Activated B cell treated with CpG ODN at 0.5 μM for 24 hours (primary cell): ENCODE measurements at regions of chr22 and their contacts with region 1.

Region 1: DNA sequence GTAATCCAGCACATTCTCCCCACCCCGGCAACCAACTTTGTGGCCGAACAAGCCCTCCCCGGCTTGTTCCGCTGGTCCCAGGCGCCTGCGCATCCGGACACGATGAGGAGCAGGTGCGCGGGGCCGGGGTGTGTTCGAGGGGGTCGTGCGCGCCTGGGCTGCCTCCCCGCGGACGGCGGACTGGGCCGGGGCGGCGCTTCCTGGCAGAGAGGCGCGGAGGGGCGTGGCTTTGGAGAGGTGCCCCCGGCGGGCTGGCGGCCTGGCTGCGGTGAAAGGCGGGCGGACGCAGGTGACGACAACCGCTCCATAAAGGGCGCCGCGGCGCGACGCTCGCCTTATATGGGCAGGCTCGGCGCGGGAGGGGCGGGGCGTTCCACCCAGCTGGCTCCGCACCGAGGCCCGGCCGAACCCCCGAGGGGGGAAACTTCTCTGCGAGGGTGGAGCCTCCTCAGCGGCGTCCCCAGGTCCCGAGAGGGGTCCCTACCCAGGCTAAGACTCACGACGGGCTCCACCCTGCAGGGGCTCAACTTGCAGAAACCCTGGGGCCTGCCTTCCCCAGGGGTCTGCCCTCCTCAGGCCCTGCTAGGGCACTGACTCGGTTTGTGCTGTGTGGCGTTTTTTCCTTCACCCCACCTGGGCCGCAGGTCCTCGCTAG is 26.4 kb downstream of the TXN2 start:
- DNase-seq: peak; percentile 91
- ATAC-seq: peak; percentile 66
- H3K4me3 Mint-ChIP-seq: peak overlapping the region; percentile 69
- H3K27ac Mint-ChIP-seq: peak overlapping the region; percentile 95
- H3K4me1 Mint-ChIP-seq: peaks cover 56% of the 10 kb centered on the region
- H3K27me3 Mint-ChIP-seq: no peaks in the 10 kb centered on the region
- CTCF ChIP-seq: no peak

Region 2: GRCh38 chr22:36409911-36410756 is 44.9 kb before region 1 on chr22:
- CTCF ChIA-PET with region 1: no interaction called
- POLR2A ChIA-PET with region 1: interaction called, 7 read pairs
- intact Hi-C with region 1: loop called (anchors 1 kb)
- DNase-seq: peak; percentile 60
- ATAC-seq: peak; percentile 70
- H3K4me3 Mint-ChIP-seq: peak overlapping the region; percentile 83
- H3K27ac Mint-ChIP-seq: peak overlapping the region; percentile 89
- H3K4me1 Mint-ChIP-seq: peaks cover 65% of the 10 kb centered on the region
- H3K27me3 Mint-ChIP-seq: no peaks in the 10 kb centered on the region
- CTCF ChIP-seq: no peak

Region 3: DNA sequence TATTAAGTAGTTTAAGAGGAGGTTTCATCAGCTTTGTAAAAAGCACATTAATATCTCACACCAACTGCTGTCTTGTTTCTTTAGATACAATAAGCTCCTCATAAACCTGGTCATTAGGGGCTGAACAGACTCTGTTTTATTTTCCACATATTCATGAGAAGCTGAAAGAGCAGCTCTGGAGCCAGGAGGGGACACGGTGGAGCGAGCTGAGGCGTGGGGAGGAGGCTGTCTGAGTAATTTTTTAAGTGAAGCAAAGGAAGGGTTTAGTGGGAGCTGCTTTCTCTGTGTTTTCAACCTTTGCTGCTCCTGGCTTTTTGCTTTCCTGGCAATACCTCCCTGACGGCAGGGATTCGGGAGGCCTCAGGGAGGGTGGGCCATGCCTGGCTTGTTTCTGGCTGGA is 140.9 kb after region 1 on chr22:
- CTCF ChIA-PET with region 1: no interaction called
- POLR2A ChIA-PET with region 1: no interaction called
- intact Hi-C with region 1: no loop called
- DNase-seq: no peak
- ATAC-seq: no peak
- H3K4me3 Mint-ChIP-seq: no peak overlapping the region
- H3K27ac Mint-ChIP-seq: no peak overlapping the region
- H3K4me1 Mint-ChIP-seq: no peaks in the 10 kb centered on the region
- H3K27me3 Mint-ChIP-seq: peaks cover 35% of the 10 kb centered on the region
- CTCF ChIP-seq: no peak